Left cardiac atrium (tissue), 4 donors: ENCODE measurements at regions of chr4 and their contacts with region 1.

Region 1: GRCh38 chr4:38034986-38035882 is 75.0 kb downstream of the PTTG2 start:
- DNase-seq: no peak
- ATAC-seq: peak; percentile 48 to 57

Region 2: GRCh38 chr4:37603070-37603468 is 432.2 kb before region 1 on chr4:
- intact Hi-C with region 1: loop called in 1 of 2 experiments (anchors 10 kb)
- DNase-seq: peak; percentile 81
- ATAC-seq: peak; percentile 93 to 94

Region 3: GRCh38 chr4:37977471-37978247 is 57.6 kb before region 1 on chr4:
- intact Hi-C with region 1: loop called in 1 of 2 experiments (anchors 5 kb)
- DNase-seq: peak; percentile 84
- ATAC-seq: peak; percentile 86 to 88